A549 (cell line): ENCODE measurements at regions of chr22 and their contacts with region 1.

Region 1: DNA sequence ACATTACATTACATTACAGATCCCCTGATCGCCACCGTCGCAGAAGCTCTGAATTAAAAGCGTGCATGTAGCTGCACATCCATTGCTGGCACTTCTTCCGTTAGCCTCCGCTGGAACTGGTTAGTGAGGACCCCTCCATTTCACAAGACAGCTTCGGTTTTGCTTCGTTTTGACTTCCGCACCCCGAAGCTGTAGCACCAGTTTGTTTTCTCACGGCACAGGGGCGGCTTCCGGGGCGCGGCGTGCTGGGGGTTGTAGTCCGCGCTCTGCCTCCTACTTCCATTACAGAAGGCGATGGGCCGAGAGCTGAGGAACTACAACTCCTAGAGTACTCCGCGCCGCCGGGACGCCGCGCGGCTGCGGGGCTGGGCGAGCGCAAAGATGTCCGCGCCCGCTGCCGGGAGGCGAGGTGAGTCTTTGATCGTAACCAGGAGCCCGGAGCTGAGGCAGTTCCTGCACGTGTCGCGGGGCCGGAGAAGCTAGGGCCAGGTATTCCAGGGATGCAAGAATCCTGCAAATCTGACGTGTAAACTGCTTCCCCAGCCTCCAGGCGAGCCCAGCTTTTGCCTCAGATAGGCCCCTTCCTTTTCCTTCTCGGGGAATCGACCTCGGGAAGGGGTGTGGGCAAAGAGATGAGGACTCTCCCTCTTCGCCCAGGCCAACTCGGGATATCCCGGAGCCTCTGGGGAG is at the start of gene PEX26:
- DNase-seq: peak; percentile 82 to 93
- ATAC-seq: peak; percentile 98 to 99
- H3K4me3 ChIP-seq: peak within 1 kb of the TSS; percentile 64
- H3K27ac ChIP-seq: peak within 1 kb of the TSS; percentile 90 to 97
- H3K4me1 ChIP-seq: peaks cover 24% of the 10 kb centered on the region
- CTCF ChIP-seq: no peak
- EP300 ChIP-seq: no peak
- POLR2A ChIP-seq: peak; percentile 38
- RAD21 ChIP-seq: no peak
- polyA plus RNA-seq, gene PEX26: 12.4 and 15.3 TPM in 2 replicates

Region 2: DNA sequence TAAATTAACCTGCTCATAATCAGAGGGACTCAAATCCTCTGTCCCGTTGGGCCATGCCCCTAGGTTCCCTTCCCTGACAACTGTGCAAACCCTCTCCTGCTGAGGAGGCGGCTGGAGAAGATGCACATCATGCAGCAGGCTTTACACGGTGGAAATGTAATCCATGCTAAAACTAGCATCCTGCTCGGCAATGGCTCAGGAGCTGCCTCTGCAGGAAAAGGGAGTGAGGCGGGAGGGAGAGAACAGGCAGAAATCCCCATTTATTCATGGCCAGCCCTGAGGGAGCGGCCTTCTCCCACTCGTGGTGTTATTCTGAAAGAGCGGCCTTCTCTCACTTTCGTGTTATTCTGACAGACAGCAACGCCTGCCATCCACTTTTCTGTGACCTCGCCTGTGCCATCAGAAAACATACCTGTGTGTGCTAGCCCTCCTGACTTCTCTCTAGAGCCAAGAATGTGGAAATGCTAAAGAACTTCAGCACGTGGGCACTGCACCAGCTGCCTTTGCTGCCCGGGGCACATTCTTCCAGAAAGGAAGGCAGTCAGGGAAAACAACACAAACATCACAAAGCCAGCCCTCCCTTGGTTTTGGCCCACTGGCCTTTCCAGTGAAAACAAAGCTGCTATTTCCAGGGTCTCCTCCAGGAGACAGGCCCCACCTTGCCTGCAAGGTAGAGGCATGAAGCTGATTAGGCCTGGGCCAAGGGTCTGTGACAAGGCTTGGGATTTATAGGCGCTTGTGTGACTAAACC is 240.6 kb before region 1 on chr22:
- CTCF ChIA-PET with region 1: interaction called, 138 read pairs
- POLR2A ChIA-PET with region 1: no interaction called
- DNase-seq: no peak
- ATAC-seq: no peak
- H3K4me3 ChIP-seq: no peak overlapping the region
- H3K27ac ChIP-seq: no peak overlapping the region
- H3K4me1 ChIP-seq: no peaks in the 10 kb centered on the region
- CTCF ChIP-seq: no peak
- EP300 ChIP-seq: no peak
- POLR2A ChIP-seq: no peak
- RAD21 ChIP-seq: no peak

Region 3: GRCh38 chr22:17960695-17961445 is 116.9 kb before region 1 on chr22:
- CTCF ChIA-PET with region 1: interaction called, 12 read pairs
- POLR2A ChIA-PET with region 1: no interaction called
- DNase-seq: no peak
- ATAC-seq: no peak
- H3K4me3 ChIP-seq: no peak overlapping the region
- H3K27ac ChIP-seq: 0 out of 6 replicates have a peak overlapping the region, but pooled peaks of 1 of the 2 experiments have one; percentile 7
- H3K4me1 ChIP-seq: peaks cover 6% of the 10 kb centered on the region
- CTCF ChIP-seq: no peak
- EP300 ChIP-seq: no peak
- POLR2A ChIP-seq: no peak
- RAD21 ChIP-seq: no peak

Region 4: GRCh38 chr22:18001040-18001893 is 76.5 kb before region 1 on chr22:
- CTCF ChIA-PET with region 1: interaction called, 107 read pairs
- POLR2A ChIA-PET with region 1: interaction called, 5 read pairs
- DNase-seq: peak; percentile 97 to 98
- ATAC-seq: peak; percentile 94
- H3K4me3 ChIP-seq: peak overlapping the region; percentile 94
- H3K27ac ChIP-seq: peak overlapping the region; percentile 96 to 99
- H3K4me1 ChIP-seq: peaks cover 26% of the 10 kb centered on the region
- CTCF ChIP-seq: peak; percentile 53
- EP300 ChIP-seq: no peak
- POLR2A ChIP-seq: peak; percentile 89
- RAD21 ChIP-seq: peak; percentile 20 to 75; a peak in 4 of 5 replicates

Region 5: GRCh38 chr22:18044548-18045271 is 33.1 kb before region 1 on chr22:
- CTCF ChIA-PET with region 1: interaction called, 20 read pairs
- POLR2A ChIA-PET with region 1: no interaction called
- DNase-seq: no peak
- ATAC-seq: no peak
- H3K4me3 ChIP-seq: no peak overlapping the region
- H3K27ac ChIP-seq: 0 out of 6 replicates have a peak overlapping the region, but pooled peaks of 1 of the 2 experiments have one; percentile 36
- H3K4me1 ChIP-seq: peaks cover 5% of the 10 kb centered on the region; the same call in 1 of the 3 replicates
- CTCF ChIP-seq: no peak
- EP300 ChIP-seq: no peak
- POLR2A ChIP-seq: no peak
- RAD21 ChIP-seq: no peak

Region 6: GRCh38 chr22:18091916-18092526 is 14.2 kb after region 1 on chr22:
- CTCF ChIA-PET with region 1: interaction called, 37 read pairs
- POLR2A ChIA-PET with region 1: no interaction called
- DNase-seq: peak; percentile 40 to 78
- ATAC-seq: peak; percentile 88 to 92
- H3K4me3 ChIP-seq: peak overlapping the region; percentile 20; the same call in 1 of the 3 replicates
- H3K27ac ChIP-seq: peak overlapping the region; percentile 81 to 93
- H3K4me1 ChIP-seq: peaks cover 31% of the 10 kb centered on the region
- CTCF ChIP-seq: no peak
- EP300 ChIP-seq: no peak
- POLR2A ChIP-seq: no peak
- RAD21 ChIP-seq: peak in 1 of 2 experiments; percentile 30; a peak in 1 of 5 replicates